Activated B cell treated with CpG ODN at 0.5 μM for 24 hours (primary cell): ENCODE measurements at regions of chr20 and their contacts with region 1.

Region 1: DNA sequence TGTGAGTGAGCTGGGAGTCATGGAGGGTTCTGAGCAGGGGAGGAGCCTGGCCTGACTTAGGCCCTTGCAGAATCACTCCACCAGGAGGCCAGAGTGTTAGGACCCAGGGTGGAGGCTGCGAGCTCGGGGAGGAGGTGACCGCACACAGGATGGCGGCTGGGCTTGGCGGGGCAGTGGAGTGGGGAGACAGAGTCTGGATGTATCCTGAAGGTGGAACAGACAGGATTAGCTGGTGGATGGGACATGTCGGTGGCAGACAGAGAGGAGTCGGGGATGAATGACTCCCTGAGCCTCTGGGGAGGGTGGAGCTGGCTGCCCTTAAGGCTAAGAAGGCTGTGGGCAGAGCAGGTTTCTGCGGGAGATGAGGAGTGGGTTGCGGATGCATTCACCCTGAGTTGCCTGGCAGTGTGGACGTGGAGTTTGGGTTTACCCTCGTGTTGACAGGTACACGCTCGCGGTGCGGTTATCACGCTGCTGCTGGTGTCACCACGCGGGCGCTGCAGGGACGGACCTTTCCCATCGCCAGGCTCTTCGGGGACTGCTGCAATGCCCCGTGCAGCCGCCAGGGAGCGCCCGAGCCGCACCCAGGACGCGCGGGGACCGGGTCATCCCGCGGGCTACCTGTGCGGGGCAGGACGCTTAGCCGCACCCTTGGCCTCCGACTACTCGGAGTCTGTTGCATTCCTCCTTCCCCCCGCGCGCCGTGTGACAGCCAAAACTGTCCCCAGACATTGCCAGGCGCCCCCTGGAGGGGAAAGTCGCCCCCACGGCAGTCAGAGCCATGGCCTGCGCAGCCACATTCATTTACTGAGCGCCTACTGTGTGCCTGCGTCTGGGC is 43.0 kb upstream of the PTGIS start:
- DNase-seq: peak; percentile 81
- ATAC-seq: peak; percentile 87
- H3K4me3 Mint-ChIP-seq: peak overlapping the region; percentile 68
- H3K27ac Mint-ChIP-seq: no peak overlapping the region
- H3K4me1 Mint-ChIP-seq: peaks cover 21% of the 10 kb centered on the region
- H3K27me3 Mint-ChIP-seq: peaks cover 12% of the 10 kb centered on the region
- CTCF ChIP-seq: peak; percentile 79

Region 2: GRCh38 chr20:48949304-48950170 is 661.4 kb before region 1 on chr20:
- CTCF ChIA-PET with region 1: no interaction called
- POLR2A ChIA-PET with region 1: no interaction called
- intact Hi-C with region 1: no loop called
- DNase-seq: no peak
- ATAC-seq: no peak
- H3K4me3 Mint-ChIP-seq: no peak overlapping the region
- H3K27ac Mint-ChIP-seq: no peak overlapping the region
- H3K4me1 Mint-ChIP-seq: no peaks in the 10 kb centered on the region
- H3K27me3 Mint-ChIP-seq: no peaks in the 10 kb centered on the region
- CTCF ChIP-seq: no peak

Region 3: GRCh38 chr20:49541733-49542513 is 69.0 kb before region 1 on chr20:
- CTCF ChIA-PET with region 1: interaction called, 14 read pairs
- POLR2A ChIA-PET with region 1: no interaction called
- intact Hi-C with region 1: loop called (anchors 1 kb)
- DNase-seq: peak; percentile 21
- ATAC-seq: peak; percentile 80
- H3K4me3 Mint-ChIP-seq: no peak overlapping the region
- H3K27ac Mint-ChIP-seq: no peak overlapping the region
- H3K4me1 Mint-ChIP-seq: no peaks in the 10 kb centered on the region
- H3K27me3 Mint-ChIP-seq: peaks cover 14% of the 10 kb centered on the region
- CTCF ChIP-seq: no peak

Region 4: GRCh38 chr20:49567421-49568334 is 43.2 kb before region 1 on chr20 and contains the start of gene PTGIS:
- CTCF ChIA-PET with region 1: no interaction called
- POLR2A ChIA-PET with region 1: no interaction called
- intact Hi-C with region 1: no loop called
- DNase-seq: no peak
- ATAC-seq: no peak
- H3K4me3 Mint-ChIP-seq: no peak within 1 kb of the TSS
- H3K27ac Mint-ChIP-seq: no peak within 1 kb of the TSS
- H3K4me1 Mint-ChIP-seq: peaks cover 1% of the 10 kb centered on the region
- H3K27me3 Mint-ChIP-seq: peaks cover 68% of the 10 kb centered on the region
- CTCF ChIP-seq: no peak
- total RNA-seq, gene PTGIS: not detected in 2 replicates

Region 5: DNA sequence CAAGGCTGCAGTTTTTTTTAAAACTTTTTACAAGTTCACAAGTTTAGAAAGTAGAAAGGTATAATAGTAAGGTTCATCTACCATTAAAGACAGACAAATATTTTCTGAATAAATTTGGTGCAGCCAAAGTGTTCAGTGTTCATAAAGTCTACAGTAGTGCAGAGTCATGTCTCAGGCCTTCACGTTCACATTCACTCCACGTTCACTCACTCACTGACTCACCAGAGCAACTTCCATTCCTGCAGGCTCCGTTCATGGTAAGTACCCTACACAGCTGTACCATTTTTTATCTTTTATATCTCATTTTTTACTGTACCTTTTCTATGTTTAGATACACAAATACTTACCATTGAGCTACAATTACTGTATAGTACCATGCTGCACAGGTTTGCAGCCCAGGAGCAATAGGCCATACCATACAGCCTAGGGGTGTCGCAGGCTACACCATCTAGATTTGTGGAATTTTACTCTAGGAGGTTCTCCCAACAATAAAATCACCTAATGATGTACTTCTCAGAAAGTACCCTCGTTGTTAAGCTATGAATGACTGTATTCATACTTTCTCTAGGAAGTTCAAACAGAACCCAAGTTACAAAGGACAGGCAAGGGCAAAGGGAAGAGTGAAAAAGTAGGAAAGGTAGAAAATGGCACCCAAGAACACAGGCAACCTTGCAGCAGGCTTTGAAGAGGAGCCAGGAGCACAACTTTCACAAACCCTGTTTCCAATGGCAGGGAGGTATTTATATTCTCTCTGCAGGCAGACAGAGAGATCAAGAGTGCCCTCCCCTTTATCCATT is 35.4 kb after region 1 on chr20:
- CTCF ChIA-PET with region 1: interaction called, 5 read pairs
- POLR2A ChIA-PET with region 1: no interaction called
- intact Hi-C with region 1: loop called (anchors 5 kb)
- DNase-seq: no peak
- ATAC-seq: no peak
- H3K4me3 Mint-ChIP-seq: no peak overlapping the region
- H3K27ac Mint-ChIP-seq: no peak overlapping the region
- H3K4me1 Mint-ChIP-seq: no peaks in the 10 kb centered on the region
- H3K27me3 Mint-ChIP-seq: no peaks in the 10 kb centered on the region
- CTCF ChIP-seq: no peak

Region 6: DNA sequence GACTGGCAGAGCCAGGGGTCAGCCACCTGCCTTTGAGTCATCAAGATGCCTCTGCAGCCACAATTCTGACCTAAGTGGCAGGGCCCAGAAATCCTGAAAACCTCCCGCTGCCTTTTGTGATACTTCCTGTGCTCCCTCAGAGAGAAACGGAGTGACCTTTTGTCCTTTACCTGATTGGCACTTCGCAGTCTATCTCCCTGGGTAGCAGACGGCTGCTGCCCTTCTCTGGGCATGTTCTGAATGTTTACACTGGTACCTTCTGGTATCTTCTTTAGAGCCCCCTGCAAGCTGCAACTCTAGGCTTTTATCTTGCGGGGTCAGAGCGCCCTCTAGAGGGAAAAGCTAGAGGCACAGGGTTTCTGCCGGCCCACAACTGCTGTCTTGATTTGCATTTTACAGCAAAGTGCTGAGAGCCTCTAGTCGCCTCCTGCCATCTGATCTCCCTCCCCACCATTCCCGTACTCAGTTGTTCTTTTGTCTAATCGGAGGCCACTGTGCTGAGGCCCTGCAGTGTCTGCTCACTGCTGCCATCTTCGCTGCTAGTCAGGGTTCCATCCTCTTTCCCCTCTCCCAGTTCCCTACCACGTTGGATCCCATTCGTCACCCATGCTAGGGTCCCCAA is 277.5 kb after region 1 on chr20:
- CTCF ChIA-PET with region 1: interaction called, 8 read pairs
- POLR2A ChIA-PET with region 1: interaction called, 4 read pairs
- intact Hi-C with region 1: loop called (anchors 1 kb)
- DNase-seq: peak; percentile 54
- ATAC-seq: peak; percentile 69
- H3K4me3 Mint-ChIP-seq: no peak overlapping the region
- H3K27ac Mint-ChIP-seq: peak overlapping the region; percentile 46
- H3K4me1 Mint-ChIP-seq: peaks cover 10% of the 10 kb centered on the region
- H3K27me3 Mint-ChIP-seq: no peaks in the 10 kb centered on the region
- CTCF ChIP-seq: no peak